Transverse colon (tissue), 4 donors: ENCODE measurements at regions of chr17 and their contacts with region 1.

Region 1: GRCh38 chr17:58517734-58518609 is 3.5 kb upstream of the MTMR4 start:
- DNase-seq: peak; percentile 100
- H3K4me3 ChIP-seq: peak overlapping the region; percentile 59 to 73 (median 68)
- H3K27ac ChIP-seq: peak overlapping the region; percentile 92 to 97 (median 96)
- H3K4me1 ChIP-seq: peaks cover 19 to 54% (median 34%) of the 10 kb centered on the region in 4 donors
- H3K27me3 ChIP-seq: no peaks in the 10 kb centered on the region
- CTCF ChIP-seq: no peak
- EP300 ChIP-seq: no peak
- POLR2A ChIP-seq: peak; percentile 74

Region 2: DNA sequence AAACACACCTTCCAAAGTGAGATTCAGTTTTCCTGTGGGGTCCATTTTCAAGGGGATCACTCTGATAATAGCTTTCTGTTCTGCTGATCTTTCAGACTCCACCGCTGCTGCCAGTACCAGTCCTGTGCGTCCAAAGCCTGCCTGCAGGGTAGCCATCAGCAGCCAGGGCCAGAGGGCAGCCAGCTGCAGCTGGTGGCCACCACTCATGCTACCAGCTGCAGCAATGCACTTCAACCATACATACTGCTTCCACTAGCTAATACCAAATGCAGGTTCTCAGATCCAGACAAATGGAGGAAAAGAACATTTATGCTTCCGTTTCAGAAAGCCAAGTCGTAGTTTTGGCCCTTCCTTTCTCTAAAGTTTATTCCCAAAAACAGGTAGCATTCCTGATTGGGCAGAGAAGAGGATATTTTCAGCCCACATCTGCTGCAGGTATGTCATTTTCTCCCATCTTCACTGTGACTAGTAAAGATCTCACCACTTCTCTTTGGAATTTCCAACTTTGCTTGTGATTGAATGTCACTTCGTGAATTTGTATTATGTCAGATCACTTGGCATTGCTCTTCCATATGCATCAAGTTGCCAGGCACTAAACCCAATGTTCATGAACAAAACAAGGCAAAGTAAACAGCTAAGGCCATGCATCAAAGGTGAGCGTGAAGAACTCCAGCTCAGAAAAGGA is 102.5 kb before region 1 on chr17:
- in situ Hi-C with region 1: no loop called
- intact Hi-C with region 1: no loop called
- DNase-seq: peak; percentile 43
- H3K4me3 ChIP-seq: peak overlapping the region in 3 of 4 donors; percentile 32 to 53 (median 39)
- H3K27ac ChIP-seq: peak overlapping the region; percentile 51 to 91 (median 79)
- H3K4me1 ChIP-seq: peaks cover 0 to 30% (median 8%) of the 10 kb centered on the region in 4 donors
- H3K27me3 ChIP-seq: no peaks in the 10 kb centered on the region
- CTCF ChIP-seq: peak in 3 of 5 experiments; percentile 21 to 52 (median 39)
- EP300 ChIP-seq: no peak
- POLR2A ChIP-seq: peak; percentile 14

Region 3: DNA sequence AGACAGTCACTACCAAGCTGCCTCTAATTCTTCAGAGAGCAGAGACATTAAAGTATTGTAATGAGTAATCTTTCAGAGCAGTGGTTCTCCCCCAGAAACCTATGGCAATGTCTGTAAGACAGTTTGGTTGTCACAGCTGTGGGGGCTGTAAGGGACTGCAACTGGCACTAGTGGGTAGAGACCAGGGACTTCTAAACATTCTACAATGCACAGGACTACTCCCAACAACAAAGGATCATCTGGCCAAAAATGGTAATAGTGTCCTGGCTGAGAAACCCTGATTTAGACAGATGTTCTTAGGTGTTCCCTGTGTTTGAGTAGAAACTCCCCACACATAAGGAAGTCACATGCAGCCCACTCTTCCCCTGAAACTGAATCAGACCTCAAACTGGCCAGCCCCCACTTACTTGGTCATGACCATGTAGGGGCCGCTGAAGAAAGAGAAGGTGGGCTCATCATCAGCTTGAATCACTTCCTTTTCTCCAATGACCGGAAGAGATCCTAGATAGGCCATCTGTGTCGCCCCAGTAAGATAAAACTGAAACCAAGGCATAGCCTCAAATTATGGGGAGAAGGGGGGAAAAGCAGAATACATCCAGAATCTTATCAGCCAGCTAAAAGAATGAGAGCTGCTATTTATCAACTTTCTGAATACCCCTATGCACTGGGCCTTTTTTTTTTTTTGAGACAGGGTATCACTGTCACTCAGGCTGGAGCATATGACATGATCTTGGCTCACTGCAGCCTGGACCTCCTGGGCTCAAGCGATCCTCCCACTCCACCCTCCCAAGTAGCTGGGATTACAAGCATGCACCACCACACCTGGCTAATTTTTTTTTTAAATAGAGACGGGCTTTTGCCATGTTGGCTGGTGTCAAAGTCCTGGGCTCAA is 98.0 kb after region 1 on chr17:
- in situ Hi-C with region 1: no loop called
- intact Hi-C with region 1: no loop called
- DNase-seq: no peak
- H3K4me3 ChIP-seq: no peak overlapping the region
- H3K27ac ChIP-seq: no peak overlapping the region
- H3K4me1 ChIP-seq: no peaks in the 10 kb centered on the region
- H3K27me3 ChIP-seq: no peaks in the 10 kb centered on the region
- CTCF ChIP-seq: no peak
- EP300 ChIP-seq: no peak
- POLR2A ChIP-seq: no peak

Region 4: GRCh38 chr17:58631523-58632323 is 113.8 kb after region 1 on chr17:
- in situ Hi-C with region 1: no loop called
- intact Hi-C with region 1: loop called (anchors 5 kb)
- DNase-seq: peak; percentile 97
- H3K4me3 ChIP-seq: peak overlapping the region; percentile 22 to 51 (median 29)
- H3K27ac ChIP-seq: peak overlapping the region; percentile 69 to 89 (median 84)
- H3K4me1 ChIP-seq: peaks cover 0 to 9% (median 7%) of the 10 kb centered on the region in 4 donors
- H3K27me3 ChIP-seq: no peaks in the 10 kb centered on the region
- CTCF ChIP-seq: peak in 4 of 5 experiments; percentile 4 to 57 (median 29)
- EP300 ChIP-seq: no peak
- POLR2A ChIP-seq: peak; percentile 99

Region 5: DNA sequence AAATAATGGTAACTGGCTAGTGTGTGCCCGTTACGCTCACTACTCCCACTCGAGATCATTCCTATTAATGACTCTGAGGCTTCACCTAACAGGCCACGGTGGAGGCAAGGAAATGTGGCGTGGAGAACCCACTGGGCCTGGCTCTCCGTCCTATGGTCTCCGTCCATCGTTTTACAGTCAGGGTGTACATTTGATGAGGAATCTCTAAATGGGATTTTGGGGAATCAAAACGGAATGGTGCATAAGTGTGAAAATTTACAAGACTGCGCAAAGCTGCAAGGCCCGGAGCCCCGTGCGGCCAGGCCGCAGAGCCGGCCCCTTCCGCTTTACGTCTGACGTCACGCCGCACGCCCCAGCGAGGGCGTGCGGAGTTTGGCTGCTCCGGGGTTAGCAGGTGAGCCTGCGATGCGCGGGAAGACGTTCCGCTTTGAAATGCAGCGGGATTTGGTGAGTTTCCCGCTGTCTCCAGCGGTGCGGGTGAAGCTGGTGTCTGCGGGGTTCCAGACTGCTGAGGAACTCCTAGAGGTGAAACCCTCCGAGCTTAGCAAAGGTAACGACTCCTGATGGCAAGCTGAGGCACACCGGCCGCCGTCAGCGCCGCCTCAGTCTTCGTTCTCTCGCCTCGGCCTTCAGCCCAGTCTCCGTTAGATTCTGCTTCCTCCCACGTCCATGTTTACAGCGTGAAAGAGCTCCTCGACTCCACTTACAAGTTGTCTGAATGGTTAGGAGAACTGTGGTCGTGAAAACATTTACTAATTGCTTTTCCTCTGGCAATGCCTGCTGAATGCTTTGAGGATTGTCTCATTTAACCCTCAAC is 174.5 kb after region 1 on chr17 and contains the start of gene RAD51C:
- in situ Hi-C with region 1: no loop called
- intact Hi-C with region 1: loop called (anchors 10 kb)
- DNase-seq: peak; percentile 90
- H3K4me3 ChIP-seq: peak within 1 kb of the TSS; percentile 48 to 68 (median 60)
- H3K27ac ChIP-seq: peak within 1 kb of the TSS; percentile 81 to 87 (median 83)
- H3K4me1 ChIP-seq: peaks cover 5 to 21% (median 8%) of the 10 kb centered on the region in 4 donors
- H3K27me3 ChIP-seq: no peaks in the 10 kb centered on the region
- CTCF ChIP-seq: no peak
- EP300 ChIP-seq: no peak
- POLR2A ChIP-seq: peak; percentile 59
- total RNA-seq, gene RAD51C: 4.9 to 37.0 (median 9.2) TPM

Region 6: GRCh38 chr17:58710936-58711775 is 193.2 kb after region 1 on chr17:
- in situ Hi-C with region 1: loop called in 1 of 4 experiments (anchors 10 kb)
- intact Hi-C with region 1: no loop called
- DNase-seq: peak; percentile 10
- H3K4me3 ChIP-seq: no peak overlapping the region
- H3K27ac ChIP-seq: no peak overlapping the region
- H3K4me1 ChIP-seq: no peaks in the 10 kb centered on the region
- H3K27me3 ChIP-seq: no peaks in the 10 kb centered on the region
- CTCF ChIP-seq: peak; percentile 62 to 73 (median 64)
- EP300 ChIP-seq: no peak
- POLR2A ChIP-seq: no peak

Region 7: DNA sequence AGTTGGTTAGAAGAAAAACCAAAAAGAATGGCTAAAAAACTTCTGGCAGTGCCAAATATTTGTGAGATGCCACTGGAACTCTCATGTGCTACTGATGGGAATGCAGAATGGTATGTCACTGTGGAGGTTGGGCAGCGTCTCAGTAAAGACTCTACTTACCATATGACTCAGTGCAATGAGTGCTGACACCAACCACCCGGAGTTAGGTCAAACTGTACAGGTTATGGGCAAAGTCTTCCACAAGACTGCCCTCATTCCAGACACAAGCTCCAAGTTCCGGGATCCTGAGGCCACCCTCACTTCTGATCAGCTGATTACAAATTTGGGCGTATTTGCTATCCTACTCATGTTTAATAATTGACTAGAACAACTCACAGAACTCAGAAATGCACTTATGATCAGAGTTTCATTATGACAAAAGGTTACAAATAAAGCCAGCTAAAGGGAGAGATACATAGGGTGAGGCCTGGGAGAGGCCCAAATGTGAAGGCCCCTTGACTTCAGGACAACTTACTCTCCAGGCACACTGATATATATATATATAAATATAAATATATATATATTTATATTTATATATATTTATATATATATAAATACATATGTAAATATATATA is 473.9 kb after region 1 on chr17:
- in situ Hi-C with region 1: loop called in 2 of 4 experiments (anchors 10 kb)
- intact Hi-C with region 1: no loop called
- DNase-seq: peak; percentile 22
- H3K4me3 ChIP-seq: no peak overlapping the region
- H3K27ac ChIP-seq: peak overlapping the region in 1 of 4 donors; percentile 21
- H3K4me1 ChIP-seq: no peaks in the 10 kb centered on the region
- H3K27me3 ChIP-seq: no peaks in the 10 kb centered on the region
- CTCF ChIP-seq: no peak
- EP300 ChIP-seq: no peak
- POLR2A ChIP-seq: no peak